GM23248 (cell line): ENCODE measurements at regions of chr21 and their contacts with region 1.

Region 1: GRCh38 chr21:42627527-42628289 is 25.7 kb upstream of the PDE9A start:
- DNase-seq: no peak
- H3K4me3 ChIP-seq: no peak overlapping the region
- H3K27ac ChIP-seq: no peak overlapping the region
- H3K4me1 ChIP-seq: no peaks in the 10 kb centered on the region
- H3K27me3 ChIP-seq: peaks cover 53% of the 10 kb centered on the region

Region 2: DNA sequence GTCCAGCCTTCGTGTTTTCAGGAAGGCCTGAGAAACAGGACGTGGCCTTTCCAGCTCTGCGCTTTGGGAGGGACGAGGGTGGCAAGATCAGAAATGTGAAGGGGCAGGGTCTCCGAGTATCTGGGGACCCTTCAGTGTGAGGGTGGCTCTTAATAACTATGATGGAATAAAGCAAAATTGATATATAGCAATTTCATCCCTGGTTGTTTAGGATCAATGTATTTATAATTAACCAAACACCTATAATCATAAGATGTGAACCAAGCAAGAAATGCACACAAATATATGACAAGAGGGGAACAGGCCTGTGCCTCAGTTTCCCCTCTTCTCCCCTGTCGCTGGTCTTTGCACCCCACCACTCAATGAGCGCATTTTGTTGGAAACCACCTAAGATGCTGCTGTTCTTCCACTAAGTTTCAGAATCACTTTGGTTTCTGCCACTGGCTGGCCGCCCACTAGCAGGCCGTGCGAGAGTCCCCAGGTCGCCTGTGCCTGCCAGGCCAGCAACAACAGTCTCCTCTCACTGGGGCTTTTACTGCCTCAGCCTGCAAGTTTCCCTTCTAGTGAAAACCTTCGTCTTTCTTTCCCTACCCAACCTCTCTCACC is 187.4 kb before region 1 on chr21:
- in situ Hi-C with region 1: no loop called
- DNase-seq: no peak
- H3K4me3 ChIP-seq: no peak overlapping the region
- H3K27ac ChIP-seq: no peak overlapping the region
- H3K4me1 ChIP-seq: no peaks in the 10 kb centered on the region
- H3K27me3 ChIP-seq: no peaks in the 10 kb centered on the region

Region 3: GRCh38 chr21:42574234-42575027 is 53.3 kb before region 1 on chr21:
- in situ Hi-C with region 1: loop called (anchors 5 kb)
- DNase-seq: peak; percentile 26
- H3K4me3 ChIP-seq: no peak overlapping the region
- H3K27ac ChIP-seq: no peak overlapping the region
- H3K4me1 ChIP-seq: no peaks in the 10 kb centered on the region
- H3K27me3 ChIP-seq: no peaks in the 10 kb centered on the region

Region 4: DNA sequence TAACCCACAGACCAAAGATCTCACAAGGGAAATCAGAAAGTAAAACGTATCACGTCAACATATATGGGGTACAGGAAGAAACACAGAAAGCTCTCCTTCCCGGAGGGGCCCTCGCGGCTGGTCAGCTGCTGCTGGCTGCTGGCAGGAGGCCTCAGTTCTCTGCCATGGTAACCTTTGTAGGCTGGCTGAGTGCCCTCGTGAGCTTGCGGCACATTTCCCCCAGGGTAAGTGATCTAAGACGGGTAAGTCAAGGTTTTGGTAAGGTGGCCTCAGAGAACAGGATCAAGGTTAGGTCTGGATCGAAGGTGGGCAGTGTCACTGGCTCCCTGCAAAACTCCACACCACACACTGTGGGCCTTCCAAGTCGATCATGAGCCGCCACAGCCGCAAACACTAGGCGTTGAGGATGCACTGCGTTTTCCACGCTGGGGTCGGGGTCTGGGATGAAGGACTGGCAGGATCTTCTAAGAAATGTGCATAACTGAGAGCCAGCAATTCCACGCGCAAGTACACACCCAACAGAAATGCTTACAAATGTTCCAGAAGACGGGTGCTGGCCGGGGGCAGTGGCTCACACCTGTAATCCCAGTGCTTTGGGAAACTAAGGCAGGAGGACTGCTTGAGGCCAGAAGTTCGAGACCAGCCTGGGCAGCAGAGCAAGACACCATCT is 217.7 kb after region 1 on chr21:
- in situ Hi-C with region 1: no loop called
- DNase-seq: no peak
- H3K4me3 ChIP-seq: no peak overlapping the region
- H3K27ac ChIP-seq: no peak overlapping the region
- H3K4me1 ChIP-seq: no peaks in the 10 kb centered on the region
- H3K27me3 ChIP-seq: no peaks in the 10 kb centered on the region